ENCODE measurements at regions of chr3 and their contacts with region 1.

Region 1: GRCh38 chr3:49734752-49735151 is 11.0 kb upstream of the GMPPB start:
- DNase-seq: no peak
- H3K4me3 ChIP-seq: no peak overlapping the region
- H3K27ac ChIP-seq: no peak overlapping the region
- H3K4me1 ChIP-seq: no peaks in the 10 kb centered on the region
- H3K27me3 ChIP-seq: no peaks in the 10 kb centered on the region
- CTCF ChIP-seq: no peak
- POLR2A ChIP-seq: no peak

Region 2: GRCh38 chr3:49370585-49371290 is 364.0 kb before region 1 on chr3:
- intact Hi-C with region 1: loop called (anchors 5 kb)
- DNase-seq: no peak
- H3K4me3 ChIP-seq: no peak overlapping the region
- H3K27ac ChIP-seq: no peak overlapping the region
- H3K4me1 ChIP-seq: no peaks in the 10 kb centered on the region
- H3K27me3 ChIP-seq: no peaks in the 10 kb centered on the region
- CTCF ChIP-seq: no peak
- POLR2A ChIP-seq: no peak

Region 3: GRCh38 chr3:49754553-49754952 is 19.8 kb after region 1 on chr3:
- intact Hi-C with region 1: loop called (anchors 1 kb)
- DNase-seq: no peak
- H3K4me3 ChIP-seq: no peak overlapping the region
- H3K27ac ChIP-seq: no peak overlapping the region
- H3K4me1 ChIP-seq: no peaks in the 10 kb centered on the region
- H3K27me3 ChIP-seq: no peaks in the 10 kb centered on the region
- CTCF ChIP-seq: no peak
- POLR2A ChIP-seq: no peak

Measured in breast epithelium (tissue), 4 donors.